ENCODE measurements at regions of chr13 and their contacts with region 1.

Region 1: DNA sequence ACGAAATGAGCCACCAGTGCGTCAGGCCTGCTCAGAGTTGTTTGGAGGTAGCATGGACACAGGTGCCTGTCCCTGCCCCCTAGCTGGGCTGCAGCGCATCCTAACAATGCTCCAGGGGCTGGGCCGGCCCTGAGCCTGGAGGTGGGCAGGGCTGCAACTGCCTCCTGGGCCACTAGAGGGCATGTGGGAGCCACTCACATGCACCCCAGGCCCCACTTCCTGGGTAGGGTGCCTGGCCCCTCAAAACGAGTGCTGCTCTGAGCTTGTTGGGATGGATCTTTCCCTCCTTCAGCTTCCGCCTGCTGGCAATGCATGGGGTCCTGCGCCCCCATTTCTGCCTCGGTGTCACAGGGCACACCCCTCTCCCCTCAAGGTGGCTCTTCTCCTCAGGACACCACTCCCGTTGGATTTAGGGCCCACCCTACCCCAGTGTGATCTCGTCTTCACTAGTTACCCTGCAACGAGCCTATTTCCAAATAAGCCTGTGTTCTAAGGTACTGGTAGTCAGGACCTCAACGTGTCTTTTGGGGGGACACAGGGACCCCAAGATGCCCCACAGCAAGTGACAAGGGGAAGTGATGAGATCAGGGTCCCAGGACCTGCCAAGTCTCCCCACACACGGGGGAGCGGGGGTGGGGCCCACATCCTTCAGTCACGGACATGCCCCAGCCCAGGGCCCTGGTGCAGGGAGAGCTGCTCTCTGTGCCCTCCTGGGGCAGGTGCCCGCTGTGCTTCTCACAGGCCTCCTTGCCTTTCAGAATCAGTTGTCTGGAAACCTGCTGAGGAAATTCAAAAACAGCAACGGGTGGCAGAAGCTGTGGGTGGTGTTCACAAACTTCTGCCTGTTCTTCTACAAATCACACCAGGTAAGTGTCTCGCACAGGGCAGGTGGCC is 131.3 kb downstream of the STK24 start:
- DNase-seq: peak; percentile 51 to 55
- ATAC-seq: peak; percentile 77 to 91
- H3K4me3 ChIP-seq: no peak overlapping the region
- H3K27ac ChIP-seq: peak overlapping the region; percentile 31 to 70; a peak in 3 of 6 replicates
- H3K4me1 ChIP-seq: peaks cover 17% of the 10 kb centered on the region; the same call in 1 of the 3 replicates
- CTCF ChIP-seq: peak; percentile 75
- EP300 ChIP-seq: no peak
- POLR2A ChIP-seq: no peak
- RAD21 ChIP-seq: peak; percentile 71 to 82

Region 2: DNA sequence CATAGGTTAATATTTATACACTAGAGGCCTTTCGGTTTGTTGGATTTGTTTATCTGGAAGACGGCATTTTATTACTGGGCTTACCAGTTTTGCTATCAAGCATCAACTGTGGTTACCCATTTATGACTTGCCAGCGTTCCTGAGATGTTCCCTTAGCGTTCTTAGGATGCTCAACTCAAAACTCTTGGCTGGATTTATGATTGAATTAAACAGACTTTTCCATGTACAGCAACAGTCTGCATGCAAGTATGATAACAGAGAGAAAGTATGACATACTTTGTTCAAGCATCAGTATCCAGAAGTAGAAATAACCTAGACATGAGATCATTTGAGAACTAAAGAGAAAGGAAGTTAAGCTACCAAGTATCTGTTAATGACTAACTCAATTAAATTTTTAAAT is 238.6 kb before region 1 on chr13:
- CTCF ChIA-PET with region 1: no interaction called
- POLR2A ChIA-PET with region 1: no interaction called
- DNase-seq: no peak
- ATAC-seq: no peak
- H3K4me3 ChIP-seq: no peak overlapping the region
- H3K27ac ChIP-seq: no peak overlapping the region
- H3K4me1 ChIP-seq: 0 out of 3 replicates have a peak, but pooled peaks cover 5% of the 10 kb centered on the region
- CTCF ChIP-seq: no peak
- EP300 ChIP-seq: no peak
- POLR2A ChIP-seq: no peak
- RAD21 ChIP-seq: no peak

Region 3: GRCh38 chr13:98370806-98371515 is 74.6 kb before region 1 on chr13:
- CTCF ChIA-PET with region 1: no interaction called
- POLR2A ChIA-PET with region 1: no interaction called
- DNase-seq: no peak
- ATAC-seq: no peak
- H3K4me3 ChIP-seq: no peak overlapping the region
- H3K27ac ChIP-seq: no peak overlapping the region
- H3K4me1 ChIP-seq: no peaks in the 10 kb centered on the region
- CTCF ChIP-seq: no peak
- EP300 ChIP-seq: no peak
- POLR2A ChIP-seq: no peak
- RAD21 ChIP-seq: no peak

Region 4: DNA sequence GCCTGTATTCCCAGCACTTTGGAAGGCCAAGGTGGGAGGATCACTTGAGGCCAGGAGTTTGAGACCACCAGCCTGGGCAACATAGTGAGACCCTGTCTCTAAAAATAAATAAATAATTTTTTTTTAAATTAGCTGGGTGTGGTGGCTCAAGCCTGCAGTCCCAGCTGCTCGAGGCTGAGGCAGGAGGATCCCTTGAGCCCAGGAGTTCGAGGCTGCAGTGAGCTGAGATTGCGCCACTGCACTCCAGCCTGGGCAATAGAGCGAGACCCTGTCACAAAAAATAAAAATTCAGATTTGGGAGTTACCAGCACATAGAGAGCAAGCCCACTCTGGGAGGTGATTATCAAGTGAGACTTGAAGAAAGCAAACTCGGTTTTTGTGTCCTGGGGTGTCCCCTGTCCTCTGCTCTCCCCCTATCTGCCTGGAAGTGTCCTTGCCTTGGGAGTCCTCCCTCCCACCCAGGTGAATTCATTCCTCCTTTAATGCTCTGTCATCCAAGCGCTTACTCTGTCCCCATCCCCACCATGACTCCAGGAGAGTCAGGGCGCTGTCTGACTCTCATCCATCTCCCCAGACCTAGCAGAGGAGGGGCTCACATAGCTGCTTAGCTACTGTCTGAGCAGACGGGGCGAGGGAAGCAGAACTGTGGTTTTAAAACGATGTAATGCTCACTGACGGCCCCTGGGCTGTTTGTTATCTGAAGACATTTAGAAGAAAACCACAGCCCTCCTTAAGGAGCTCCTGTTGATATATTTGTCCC is 15.4 kb before region 1 on chr13:
- CTCF ChIA-PET with region 1: interaction called, 34 read pairs
- POLR2A ChIA-PET with region 1: no interaction called
- DNase-seq: no peak
- ATAC-seq: no peak
- H3K4me3 ChIP-seq: no peak overlapping the region
- H3K27ac ChIP-seq: no peak overlapping the region
- H3K4me1 ChIP-seq: no peaks in the 10 kb centered on the region
- CTCF ChIP-seq: no peak
- EP300 ChIP-seq: no peak
- POLR2A ChIP-seq: no peak
- RAD21 ChIP-seq: no peak

Region 5: GRCh38 chr13:98478189-98479129 is 32.9 kb after region 1 on chr13:
- CTCF ChIA-PET with region 1: interaction called, 15 read pairs
- POLR2A ChIA-PET with region 1: no interaction called
- DNase-seq: no peak
- ATAC-seq: no peak
- H3K4me3 ChIP-seq: no peak overlapping the region
- H3K27ac ChIP-seq: 0 out of 6 replicates have a peak overlapping the region, but pooled peaks of 1 of the 2 experiments have one; percentile 32
- H3K4me1 ChIP-seq: peaks cover 35% of the 10 kb centered on the region
- CTCF ChIP-seq: no peak
- EP300 ChIP-seq: no peak
- POLR2A ChIP-seq: no peak
- RAD21 ChIP-seq: no peak

Region 6: GRCh38 chr13:98653463-98653985 is 207.9 kb after region 1 on chr13:
- CTCF ChIA-PET with region 1: interaction called, 78 read pairs
- POLR2A ChIA-PET with region 1: interaction called, 3 read pairs
- DNase-seq: peak; percentile 76 to 80
- ATAC-seq: peak; percentile 97 to 98
- H3K4me3 ChIP-seq: no peak overlapping the region
- H3K27ac ChIP-seq: no peak overlapping the region
- H3K4me1 ChIP-seq: 0 out of 3 replicates have a peak, but pooled peaks cover 3% of the 10 kb centered on the region
- CTCF ChIP-seq: peak; percentile 73
- EP300 ChIP-seq: no peak
- POLR2A ChIP-seq: no peak
- RAD21 ChIP-seq: peak; percentile 76 to 79

Region 7: DNA sequence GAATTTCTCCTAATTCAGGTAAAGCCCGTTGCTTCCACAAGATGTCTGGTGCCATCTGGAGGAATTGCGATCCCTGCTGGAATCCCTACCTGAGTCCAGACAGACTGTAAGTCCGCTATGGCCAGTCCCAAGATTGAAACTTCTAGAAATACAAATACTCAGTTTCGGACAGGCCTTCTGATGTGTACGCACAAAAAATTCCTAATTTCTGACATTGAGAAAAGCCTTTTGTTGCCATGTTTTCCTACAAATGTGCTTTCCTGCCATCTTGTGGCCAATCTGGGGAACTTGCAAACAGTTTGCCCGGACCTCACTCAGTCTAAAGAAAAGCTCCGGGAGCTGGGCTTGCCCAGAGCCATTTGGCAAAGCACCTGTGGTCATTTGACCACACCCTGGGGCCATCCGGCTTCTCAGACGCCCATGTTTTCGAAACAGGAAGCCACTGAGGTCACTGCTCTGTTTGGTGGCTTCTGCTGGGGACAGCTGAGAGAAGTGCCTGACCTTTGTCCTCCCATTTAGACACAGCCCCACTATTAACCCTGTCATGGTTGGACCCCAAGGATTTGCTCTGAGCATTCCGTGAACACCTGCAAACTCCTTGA is 227.5 kb after region 1 on chr13:
- CTCF ChIA-PET with region 1: interaction called, 32 read pairs
- POLR2A ChIA-PET with region 1: no interaction called
- DNase-seq: peak; percentile 70 to 75
- ATAC-seq: peak; percentile 89 to 93
- H3K4me3 ChIP-seq: no peak overlapping the region
- H3K27ac ChIP-seq: peak overlapping the region; percentile 37 to 75; a peak in 4 of 6 replicates
- H3K4me1 ChIP-seq: peaks cover 4% of the 10 kb centered on the region; the same call in 2 of the 3 replicates
- CTCF ChIP-seq: peak; percentile 91
- EP300 ChIP-seq: no peak
- POLR2A ChIP-seq: no peak
- RAD21 ChIP-seq: peak; percentile 75 to 85